AG04449 (cell line): ENCODE measurements at regions of chr4 and their contacts with region 1.

Region 1: DNA sequence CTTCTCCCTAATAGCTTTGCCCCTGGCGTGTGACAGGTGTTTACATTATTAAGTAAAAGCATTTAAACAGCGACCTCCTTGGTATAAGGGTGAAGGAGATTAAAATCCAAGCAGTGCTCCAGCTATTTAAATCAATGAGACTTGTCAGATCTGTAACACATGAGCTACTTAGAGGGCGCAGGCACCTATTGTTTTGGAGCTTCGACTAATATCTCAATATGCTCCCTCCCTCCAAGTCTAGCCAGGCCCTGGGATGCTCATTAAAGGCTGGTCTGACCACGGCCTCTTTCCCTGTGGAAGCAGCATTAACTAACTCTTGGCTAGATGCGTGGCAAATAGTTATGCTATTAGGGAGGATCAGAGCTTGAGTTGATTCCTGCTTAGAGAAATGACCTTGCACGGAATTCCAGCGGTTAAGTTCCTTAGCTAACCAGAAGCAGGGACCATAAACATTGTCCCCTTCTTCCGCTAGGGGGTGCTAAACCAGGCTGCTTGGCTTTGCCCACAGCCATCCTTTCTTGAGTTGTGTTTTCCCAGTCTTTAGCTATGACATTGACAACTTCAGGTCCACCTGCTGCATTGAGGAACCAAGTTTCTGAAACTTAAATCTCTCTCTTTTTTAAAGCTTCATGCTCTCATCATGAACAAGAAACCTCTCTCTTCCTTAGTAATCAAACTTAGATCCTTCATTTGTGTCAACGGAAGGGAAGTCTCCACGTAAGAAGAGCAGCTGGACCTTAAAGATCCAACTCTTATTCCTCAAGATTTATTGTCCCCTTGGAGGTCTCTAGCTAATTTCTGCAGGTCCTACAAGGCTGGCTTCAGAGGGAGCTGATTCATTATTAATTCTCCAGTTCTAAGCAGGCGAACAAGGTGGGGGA is 80.7 kb upstream of the IGFBP7 start:
- DNase-seq: no peak
- H3K4me3 ChIP-seq: no peak overlapping the region
- CTCF ChIP-seq: peak; percentile 51

Region 2: GRCh38 chr4:57200928-57201327 is 10.1 kb after region 1 on chr4:
- CTCF ChIA-PET with region 1: interaction called, 17 read pairs
- POLR2A ChIA-PET with region 1: no interaction called
- DNase-seq: no peak
- H3K4me3 ChIP-seq: no peak overlapping the region
- CTCF ChIP-seq: no peak